Activated T-helper 1 cell treated with anti-CD3 and anti-CD28 coated beads, Interleukin-12 subunit alpha, Interleukin-12 subunit beta, Interleukin-2, Interleukin-4 antibody, amounts not matched to agents 30 ng/mL and 10 ng/mL and 1 ng/mL, durations not matched to agents 14 hours and 24 hours and 36 hours (primary cell): ENCODE measurements at regions of chr6 and their contacts with region 1.

Region 1: GRCh38 chr6:90296346-90297114 is at the start of gene BACH2:
- DNase-seq: peak; percentile 88
- H3K4me3 Mint-ChIP-seq: peak within 1 kb of the TSS; percentile 93
- H3K27ac Mint-ChIP-seq: peak within 1 kb of the TSS; percentile 95
- H3K4me1 Mint-ChIP-seq: peaks cover 39% of the 10 kb centered on the region
- H3K27me3 Mint-ChIP-seq: peaks cover 21% of the 10 kb centered on the region
- total RNA-seq, gene BACH2: 68.1 and 71.2 TPM in 2 replicates

Region 2: DNA sequence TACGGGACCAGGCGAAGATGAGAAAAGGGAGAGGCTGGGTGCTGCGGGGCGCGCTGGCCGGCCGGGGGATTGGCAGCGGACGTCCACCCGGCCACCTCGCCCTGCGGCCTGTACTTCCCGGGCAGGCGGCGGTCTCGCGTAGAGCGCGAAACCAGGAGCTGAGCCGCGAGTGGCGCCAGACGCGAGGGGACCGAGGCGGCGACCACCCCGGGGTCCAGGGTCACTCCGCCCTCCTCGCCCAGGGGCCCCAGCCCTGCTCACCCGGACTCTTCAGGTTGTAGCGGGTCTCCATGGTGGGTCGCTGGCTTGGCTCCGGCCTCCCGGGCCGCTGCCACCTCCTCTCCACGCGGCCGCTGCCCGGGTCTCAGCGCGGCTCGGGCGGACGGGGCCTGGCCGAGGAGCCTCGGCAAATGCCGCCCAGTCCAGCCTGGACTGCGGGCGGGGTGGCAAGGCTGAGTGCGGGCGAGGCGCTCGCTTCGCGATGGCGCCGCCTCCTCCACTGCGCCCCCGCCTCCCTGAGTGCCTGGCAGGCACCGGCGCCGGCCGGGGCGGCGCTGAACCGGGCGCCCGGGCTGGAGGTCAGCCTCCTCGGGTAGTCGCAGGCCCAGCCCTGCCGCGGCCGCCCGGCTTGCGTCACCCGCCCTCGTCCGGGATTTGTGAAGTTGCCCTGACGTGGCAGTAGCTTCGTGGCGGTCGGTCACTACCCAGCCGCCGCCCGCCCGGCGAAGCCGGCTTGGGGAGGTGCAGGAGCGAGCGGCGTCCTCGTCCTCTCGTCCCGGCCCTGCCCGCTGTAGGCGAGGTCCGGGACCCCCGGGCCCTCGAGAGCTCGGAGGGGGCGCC is 944.0 kb before region 1 on chr6 and contains the start of gene UBE2J1:
- intact Hi-C with region 1: loop called (anchors 10 kb)
- DNase-seq: peak; percentile 75
- H3K4me3 Mint-ChIP-seq: peak within 1 kb of the TSS; percentile 96
- H3K27ac Mint-ChIP-seq: peak within 1 kb of the TSS; percentile 96
- H3K4me1 Mint-ChIP-seq: peaks cover 82% of the 10 kb centered on the region
- H3K27me3 Mint-ChIP-seq: no peaks in the 10 kb centered on the region
- total RNA-seq, gene UBE2J1: 38.1 and 40.5 TPM in 2 replicates

Region 3: GRCh38 chr6:89711801-89712200 is 584.7 kb before region 1 on chr6:
- intact Hi-C with region 1: no loop called
- DNase-seq: no peak
- H3K4me3 Mint-ChIP-seq: no peak overlapping the region
- H3K27ac Mint-ChIP-seq: no peak overlapping the region
- H3K4me1 Mint-ChIP-seq: peaks cover 7% of the 10 kb centered on the region
- H3K27me3 Mint-ChIP-seq: no peaks in the 10 kb centered on the region

Region 4: DNA sequence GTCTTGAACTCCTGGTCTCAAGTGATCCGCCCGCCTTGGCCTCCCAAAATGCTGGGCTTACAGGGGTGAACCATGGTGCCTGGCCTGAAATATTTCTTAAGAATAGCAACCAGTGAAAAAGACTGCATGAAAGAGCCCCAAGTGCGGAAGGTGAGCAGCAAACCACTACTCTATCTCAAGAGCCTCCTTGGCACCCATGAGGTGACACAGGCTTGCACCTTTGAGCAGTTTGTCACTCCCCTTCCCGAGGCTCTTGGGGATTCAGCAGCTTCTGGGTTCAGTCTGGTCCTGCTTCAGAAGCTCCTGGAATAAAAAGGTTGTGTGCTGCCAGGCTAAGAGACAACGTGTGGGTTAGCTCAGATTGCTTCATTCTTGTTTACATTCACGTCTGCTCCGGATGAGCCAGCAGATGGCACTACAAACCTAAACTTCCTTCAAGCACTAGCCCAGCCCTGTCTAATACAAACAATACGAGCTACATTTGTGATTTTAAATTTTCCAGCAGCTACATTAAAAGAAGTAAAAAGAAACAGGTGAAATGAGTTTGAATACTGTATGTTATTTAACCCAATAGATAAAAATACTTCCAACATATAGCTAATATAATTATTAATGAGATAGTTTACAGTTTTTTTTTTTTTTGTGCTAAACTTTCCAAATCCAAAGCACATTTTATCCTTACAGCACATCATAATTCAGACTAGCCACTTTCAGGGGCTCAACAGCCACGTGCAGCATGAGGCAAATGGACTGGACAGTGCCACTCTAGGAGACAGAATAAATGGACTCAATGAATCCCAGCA is 356.1 kb before region 1 on chr6:
- intact Hi-C with region 1: loop called (anchors 1 kb)
- DNase-seq: peak; percentile 57
- H3K4me3 Mint-ChIP-seq: no peak overlapping the region
- H3K27ac Mint-ChIP-seq: no peak overlapping the region
- H3K4me1 Mint-ChIP-seq: peaks cover 25% of the 10 kb centered on the region
- H3K27me3 Mint-ChIP-seq: no peaks in the 10 kb centered on the region

Region 5: DNA sequence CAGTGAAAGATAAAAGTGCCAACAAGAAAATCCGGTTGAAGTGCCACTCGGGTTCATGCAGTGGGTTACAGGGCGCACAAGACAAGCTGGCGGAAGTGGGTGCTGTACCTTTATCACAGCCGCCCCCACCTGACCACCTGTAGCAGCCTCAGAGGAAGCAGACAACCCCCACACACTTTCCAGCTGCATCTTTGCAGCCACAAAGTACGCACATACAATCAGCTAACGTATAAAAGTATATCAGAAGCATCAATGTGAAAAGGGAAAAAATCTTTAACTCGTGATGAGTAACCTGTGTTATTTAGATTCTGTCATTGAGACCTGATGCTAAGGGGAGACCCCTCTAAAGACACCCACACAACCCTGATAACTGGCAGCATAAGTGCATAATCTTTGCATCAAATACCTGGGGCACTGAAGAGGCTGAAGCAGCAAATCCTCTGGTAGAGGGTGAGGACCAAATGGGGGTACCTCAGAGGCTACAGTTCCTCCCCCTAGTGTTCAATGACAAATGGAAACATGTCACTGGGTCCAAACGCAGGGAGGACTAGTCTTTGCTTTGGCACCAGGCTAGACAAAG is 22.0 kb before region 1 on chr6:
- intact Hi-C with region 1: loop called (anchors 1 kb)
- DNase-seq: peak; percentile 75
- H3K4me3 Mint-ChIP-seq: peak overlapping the region; percentile 75
- H3K27ac Mint-ChIP-seq: peak overlapping the region; percentile 94
- H3K4me1 Mint-ChIP-seq: peaks cover 86% of the 10 kb centered on the region
- H3K27me3 Mint-ChIP-seq: no peaks in the 10 kb centered on the region

Region 6: DNA sequence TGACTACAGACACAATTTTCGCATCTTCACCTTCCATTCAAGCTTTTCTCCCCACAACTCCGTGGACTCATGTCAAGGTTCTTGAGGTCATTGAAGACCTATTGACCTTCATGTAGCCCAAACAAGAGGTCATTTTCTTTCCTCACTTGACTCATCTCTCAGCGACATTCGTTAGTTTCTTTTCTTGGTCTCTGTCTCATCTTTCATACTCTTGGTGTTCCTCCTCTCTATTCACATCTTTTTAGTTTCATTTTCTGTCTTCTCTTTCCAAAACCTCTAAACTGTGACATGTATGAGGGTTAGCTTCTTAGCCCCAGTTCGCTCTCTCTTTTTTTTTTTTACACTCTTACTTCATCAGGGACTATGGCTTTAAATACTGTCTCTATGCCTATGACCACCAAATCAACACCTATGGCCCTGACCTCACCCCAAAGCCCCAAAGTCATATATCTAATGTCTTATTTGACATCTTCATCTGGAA is 128.7 kb after region 1 on chr6:
- intact Hi-C with region 1: loop called (anchors 1 kb)
- DNase-seq: no peak
- H3K4me3 Mint-ChIP-seq: peak overlapping the region; percentile 68
- H3K27ac Mint-ChIP-seq: peak overlapping the region; percentile 87
- H3K4me1 Mint-ChIP-seq: peaks cover 26% of the 10 kb centered on the region
- H3K27me3 Mint-ChIP-seq: no peaks in the 10 kb centered on the region

Region 7: GRCh38 chr6:90478789-90479602 is 182.5 kb after region 1 on chr6:
- intact Hi-C with region 1: loop called (anchors 1 kb)
- DNase-seq: peak; percentile 76
- H3K4me3 Mint-ChIP-seq: peak overlapping the region; percentile 3
- H3K27ac Mint-ChIP-seq: peak overlapping the region; percentile 85
- H3K4me1 Mint-ChIP-seq: peaks cover 56% of the 10 kb centered on the region
- H3K27me3 Mint-ChIP-seq: peaks cover 2% of the 10 kb centered on the region

Region 8: GRCh38 chr6:90621581-90621980 is 325.1 kb after region 1 on chr6:
- intact Hi-C with region 1: no loop called
- DNase-seq: no peak
- H3K4me3 Mint-ChIP-seq: no peak overlapping the region
- H3K27ac Mint-ChIP-seq: no peak overlapping the region
- H3K4me1 Mint-ChIP-seq: no peaks in the 10 kb centered on the region
- H3K27me3 Mint-ChIP-seq: peaks cover 31% of the 10 kb centered on the region